ENCODE measurements at regions of chr5 and their contacts with region 1.

Region 1: DNA sequence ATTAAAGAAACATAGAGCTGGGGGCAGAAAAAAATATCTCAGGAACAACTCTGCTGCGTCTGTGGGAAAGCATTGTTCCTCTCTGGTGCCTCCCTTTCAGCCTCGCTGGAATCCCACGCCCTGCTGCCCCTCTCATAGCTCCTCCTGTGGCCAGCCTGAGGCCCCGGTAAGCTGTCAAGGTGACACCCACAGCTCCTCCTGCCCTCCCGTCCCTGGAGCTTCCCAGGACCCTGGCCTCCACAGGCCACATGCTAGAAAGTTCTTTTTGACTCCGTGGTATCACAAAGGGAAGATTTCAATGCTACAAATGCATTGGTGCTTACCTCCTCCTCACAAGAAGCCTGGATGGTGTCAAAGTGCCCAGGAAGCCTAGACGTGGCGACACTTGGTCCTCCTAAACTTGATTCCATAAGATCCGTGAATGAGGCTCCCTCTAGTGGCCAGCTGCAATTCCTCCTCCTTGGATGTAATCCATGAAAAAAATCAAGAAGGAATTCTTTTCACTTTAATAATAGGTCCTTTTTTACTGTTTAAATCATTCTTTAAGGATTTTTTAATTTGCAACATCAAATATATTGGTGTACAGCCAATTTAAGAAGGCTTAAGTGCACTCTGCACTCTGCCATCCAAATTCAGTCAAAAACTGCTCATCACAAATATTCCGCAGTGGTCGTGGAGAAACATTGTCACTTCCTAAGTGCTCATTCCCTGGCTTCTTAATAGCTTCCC is 104.9 kb downstream of the CFAP90 start:
- DNase-seq: peak; percentile 35
- ATAC-seq: peak; percentile 85; the same call in 1 of the 2 replicates
- H3K4me3 ChIP-seq: no peak overlapping the region
- H3K27ac ChIP-seq: no peak overlapping the region
- H3K4me1 ChIP-seq: no peaks in the 10 kb centered on the region
- H3K27me3 ChIP-seq: no peaks in the 10 kb centered on the region; the same call in 1 of the 2 replicates
- CTCF ChIP-seq: peak; percentile 93

Region 2: GRCh38 chr5:6760686-6761085 is 985.4 kb before region 1 on chr5:
- CTCF ChIA-PET with region 1: interaction called, 9 read pairs
- POLR2A ChIA-PET with region 1: no interaction called
- in situ Hi-C with region 1: no loop called
- intact Hi-C with region 1: loop called (anchors 5 kb)
- DNase-seq: no peak
- ATAC-seq: no peak
- H3K4me3 ChIP-seq: no peak overlapping the region
- H3K27ac ChIP-seq: no peak overlapping the region; the same call in 1 of the 2 replicates
- H3K4me1 ChIP-seq: peaks cover 6% of the 10 kb centered on the region
- H3K27me3 ChIP-seq: no peaks in the 10 kb centered on the region
- CTCF ChIP-seq: no peak

Region 3: GRCh38 chr5:7261049-7261448 is 485.0 kb before region 1 on chr5:
- CTCF ChIA-PET with region 1: no interaction called
- POLR2A ChIA-PET with region 1: no interaction called
- in situ Hi-C with region 1: no loop called
- intact Hi-C with region 1: loop called (anchors 5 kb)
- DNase-seq: peak; percentile 15
- ATAC-seq: 0 out of 2 replicates have a peak, but pooled peaks have one; percentile 73
- H3K4me3 ChIP-seq: no peak overlapping the region
- H3K27ac ChIP-seq: no peak overlapping the region
- H3K4me1 ChIP-seq: no peaks in the 10 kb centered on the region
- H3K27me3 ChIP-seq: no peaks in the 10 kb centered on the region
- CTCF ChIP-seq: peak; percentile 66

Measured in Panc1 (cell line).